ENCODE measurements at regions of chrX and their contacts with region 1.

Region 1: GRCh38 chrX:130393451-130394074 is 8.1 kb upstream of the GPR119 start:
- DNase-seq: peak in 9 of 10 donors; percentile 19 to 72 (median 64)
- H3K4me3 ChIP-seq: no peak overlapping the region
- H3K27ac ChIP-seq: no peak overlapping the region
- H3K27me3 ChIP-seq: peaks cover 0 to 56% (median 9%) of the 10 kb centered on the region in 45 donors
- CTCF ChIP-seq: peak; percentile 22 to 83 (median 71)

Region 2: DNA sequence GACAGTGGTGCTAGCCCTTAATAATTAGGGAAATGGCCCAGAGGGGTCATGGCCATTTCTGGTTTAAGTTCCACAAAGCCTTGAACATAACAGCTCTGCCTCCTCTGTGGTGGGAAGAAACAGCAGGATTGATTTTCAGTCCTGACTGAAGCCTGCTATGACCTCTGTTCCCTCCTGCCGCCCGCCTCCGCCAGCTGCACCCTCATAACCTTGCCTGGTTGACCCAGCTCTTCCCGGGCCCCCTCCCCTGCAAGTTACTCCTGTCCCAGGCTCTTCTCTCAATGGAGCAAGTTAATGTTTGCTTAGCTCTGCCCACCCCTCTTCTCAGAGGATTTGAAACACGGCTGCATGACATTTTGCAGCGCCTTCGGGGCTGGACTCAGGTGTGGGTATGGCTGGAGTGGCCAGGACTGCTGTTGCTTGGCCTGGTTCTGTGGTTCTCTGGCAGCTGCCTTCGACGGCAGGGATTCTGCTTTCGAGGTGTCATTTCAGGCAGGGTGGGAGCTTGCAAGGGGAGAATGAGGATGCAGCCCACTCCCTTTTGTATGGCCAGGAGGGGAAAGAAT is 383.8 kb before region 1 on chrX:
- intact Hi-C with region 1: no loop called
- DNase-seq: no peak
- H3K4me3 ChIP-seq: no peak overlapping the region
- H3K27ac ChIP-seq: no peak overlapping the region
- H3K27me3 ChIP-seq: peaks cover 0 to 39% (median under 1%) of the 10 kb centered on the region in 45 donors
- CTCF ChIP-seq: no peak

Region 3: DNA sequence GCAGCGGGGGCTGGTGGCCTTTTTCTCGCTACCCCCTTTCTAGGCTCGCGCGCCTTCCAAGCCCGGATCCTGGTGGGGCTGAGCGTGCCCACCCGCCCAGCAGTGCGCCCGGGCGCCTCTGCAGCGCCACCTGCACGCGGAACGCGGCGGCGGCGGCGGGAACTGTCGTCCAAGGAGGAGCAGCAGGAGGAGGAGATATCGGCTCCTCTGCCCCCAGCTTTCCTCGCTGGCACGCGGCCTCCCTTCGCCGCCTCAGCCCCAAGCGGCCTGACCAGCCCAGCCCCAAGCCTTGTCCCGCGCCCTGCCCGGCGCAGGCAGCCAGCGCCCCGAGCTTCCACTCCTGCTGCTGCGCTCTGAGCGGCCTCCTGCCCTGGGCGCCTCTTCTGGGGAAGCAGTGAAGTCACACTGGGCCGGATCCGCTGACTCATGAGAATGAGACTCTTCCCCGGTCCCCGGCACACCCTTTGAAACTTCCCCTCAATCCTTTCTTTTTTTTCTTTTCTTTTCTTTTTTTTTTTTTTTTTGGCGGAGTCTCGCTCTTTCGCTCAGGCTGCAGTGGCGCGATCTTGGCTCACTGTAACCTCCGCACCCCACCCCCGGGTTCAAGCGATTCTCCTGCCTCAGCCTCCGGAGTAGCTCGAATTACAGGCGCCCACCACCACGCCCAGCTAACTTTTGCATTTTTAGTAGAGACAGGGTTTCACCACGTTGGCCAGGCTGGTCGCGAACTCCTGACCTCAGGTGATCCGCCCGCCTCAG is 272.6 kb before region 1 on chrX:
- intact Hi-C with region 1: no loop called
- DNase-seq: peak in 8 of 10 donors; percentile 37 to 73 (median 52)
- H3K4me3 ChIP-seq: peak overlapping the region; percentile 22 to 67 (median 49)
- H3K27ac ChIP-seq: peak overlapping the region in 17 of 59 donors; percentile 1 to 65 (median 48)
- H3K27me3 ChIP-seq: peaks cover 0 to 82% (median 18%) of the 10 kb centered on the region in 45 donors
- CTCF ChIP-seq: peak; percentile 28 to 75 (median 62)

Region 4: GRCh38 chrX:130339408-130340222 is 53.9 kb before region 1 on chrX and contains the start of gene SLC25A14:
- intact Hi-C with region 1: loop called in 1 of 2 experiments (anchors 10 kb)
- DNase-seq: peak; percentile 31 to 79 (median 68)
- H3K4me3 ChIP-seq: peak within 1 kb of the TSS; percentile 41 to 81 (median 68)
- H3K27ac ChIP-seq: peak within 1 kb of the TSS in 5 of 59 donors; percentile 9 to 63 (median 38)
- H3K27me3 ChIP-seq: peaks cover 0 to 48% (median 7%) of the 10 kb centered on the region in 45 donors
- CTCF ChIP-seq: peak in 1 of 56 donors; percentile 12
- total RNA-seq, gene SLC25A14: 15.5 to 47.1 (median 31.5) TPM